HepG2 (cell line): ENCODE measurements at regions of chr3 and their contacts with region 1.

Region 1: GRCh38 chr3:129224984-129225393 is 24.4 kb upstream of the COPG1 start:
- DNase-seq: peak; percentile 92
- ATAC-seq: peak; percentile 96
- H3K4me3 ChIP-seq: peak overlapping the region; percentile 48 to 67 (median 60)
- H3K27ac ChIP-seq: peak overlapping the region; percentile 91
- H3K4me1 ChIP-seq: peaks cover 59% of the 10 kb centered on the region
- H3K27me3 ChIP-seq: no peaks in the 10 kb centered on the region
- CTCF ChIP-seq: peak; percentile 26; the same call in 1 of the 2 replicates
- EP300 ChIP-seq: peak in 1 of 2 experiments; percentile 73; a peak in 3 of 4 replicates
- POLR2A ChIP-seq: peak; percentile 81 to 89
- RAD21 ChIP-seq: peak; percentile 8; the same call in 1 of the 2 replicates

Region 2: DNA sequence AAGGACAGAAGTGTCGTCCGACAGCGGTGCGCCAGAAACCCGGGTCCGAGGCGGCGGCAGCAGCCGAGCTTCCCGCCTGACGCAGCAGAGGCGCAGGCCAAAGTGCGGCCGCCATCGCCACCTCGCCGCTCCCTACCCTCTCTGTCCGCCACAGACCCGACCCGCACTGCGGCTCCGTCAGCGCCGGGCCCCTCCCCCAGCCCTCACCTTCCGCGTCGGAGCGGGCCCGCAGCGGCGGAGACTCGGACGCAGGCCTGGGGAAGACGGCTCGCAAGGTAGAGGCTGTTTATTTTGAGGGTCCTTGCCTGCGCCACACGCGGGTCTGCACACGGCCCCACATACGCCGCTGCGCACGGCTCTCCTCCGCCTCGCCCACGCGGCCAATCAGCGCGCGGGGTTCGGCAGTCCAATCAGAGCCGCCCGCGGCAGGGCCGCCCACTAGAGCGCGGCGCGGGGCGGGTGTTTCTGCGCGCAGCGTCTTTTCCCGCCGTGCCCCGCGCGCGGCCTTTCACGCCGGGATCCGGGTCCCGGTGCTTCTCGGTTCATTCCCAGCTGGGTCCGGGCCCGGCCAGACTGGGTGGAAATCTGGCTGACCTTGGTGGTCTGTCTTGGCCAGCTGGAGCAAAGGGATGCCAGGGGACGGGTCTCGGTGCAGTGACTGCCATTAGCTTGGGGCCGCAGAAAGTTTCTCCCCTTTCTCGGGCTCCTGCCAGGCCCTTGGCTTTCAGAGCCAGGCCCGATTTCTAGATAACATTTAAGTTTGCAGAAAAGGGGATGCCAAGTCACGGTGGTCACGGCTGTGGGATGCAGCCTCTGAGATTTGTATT is 41.2 kb before region 1 on chr3 and contains the start of gene CNBP:
- CTCF ChIA-PET with region 1: no interaction called
- POLR2A ChIA-PET with region 1: interaction called, 16 read pairs
- in situ Hi-C with region 1: no loop called
- intact Hi-C with region 1: loop called (anchors 5 kb)
- DNase-seq: peak; percentile 83
- ATAC-seq: peak; percentile 98
- H3K4me3 ChIP-seq: peak within 1 kb of the TSS; percentile 91 to 95 (median 95)
- H3K27ac ChIP-seq: peak within 1 kb of the TSS; percentile 99
- H3K4me1 ChIP-seq: peaks cover 40% of the 10 kb centered on the region
- H3K27me3 ChIP-seq: no peaks in the 10 kb centered on the region; a peak in 1 of 5 replicates
- CTCF ChIP-seq: no peak; the same call in 1 of the 2 replicates
- EP300 ChIP-seq: no peak; a peak in 1 of 4 replicates
- POLR2A ChIP-seq: peak; percentile 85 to 94
- RAD21 ChIP-seq: no peak; the same call in 1 of the 2 replicates
- total RNA-seq, gene CNBP: 354 and 539 TPM in 2 replicates

Region 3: DNA sequence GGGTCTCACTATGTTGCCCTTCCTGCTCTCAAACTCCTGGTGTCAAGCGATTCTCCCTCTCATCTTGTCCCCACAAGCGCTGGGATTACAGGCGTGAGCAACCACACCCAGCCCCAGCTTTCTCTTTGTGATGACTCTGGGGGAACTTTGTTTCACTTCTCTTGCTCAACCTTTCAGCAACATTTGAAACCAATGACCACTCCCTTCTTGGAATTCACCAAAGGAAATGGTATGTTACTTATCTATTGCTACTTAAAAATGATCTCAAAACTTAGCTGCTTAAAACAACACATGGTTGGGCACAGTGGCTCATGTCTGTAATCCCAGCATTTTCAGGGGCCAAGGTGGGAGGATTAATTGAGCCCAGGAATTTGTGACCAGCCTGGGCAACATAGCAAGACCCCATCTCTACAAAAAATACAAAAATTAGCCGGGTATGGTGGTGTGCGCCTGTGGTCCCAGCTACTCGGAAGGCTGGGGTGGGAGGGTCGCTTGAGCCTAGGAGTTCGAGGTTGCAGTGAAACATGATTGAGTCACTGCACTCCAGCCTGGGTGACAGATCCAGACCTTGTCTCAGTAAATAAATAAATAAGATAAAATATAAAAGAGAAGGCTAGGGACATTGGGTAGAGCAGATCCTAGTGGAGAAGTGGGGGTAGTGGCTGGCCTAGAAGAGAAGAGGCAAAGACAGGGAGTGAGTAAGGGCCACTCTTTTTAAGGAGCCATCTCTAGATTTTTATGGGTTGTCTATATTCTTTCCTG is 14.1 kb after region 1 on chr3:
- CTCF ChIA-PET with region 1: interaction called, 3 read pairs
- POLR2A ChIA-PET with region 1: interaction called, 10 read pairs
- in situ Hi-C with region 1: no loop called
- intact Hi-C with region 1: loop called (anchors 2 kb)
- DNase-seq: no peak
- ATAC-seq: peak; percentile 46
- H3K4me3 ChIP-seq: 0 out of 6 replicates have a peak overlapping the region, but pooled peaks of 1 of the 3 experiments have one; percentile 7
- H3K27ac ChIP-seq: no peak overlapping the region
- H3K4me1 ChIP-seq: peaks cover 32% of the 10 kb centered on the region
- H3K27me3 ChIP-seq: no peaks in the 10 kb centered on the region
- CTCF ChIP-seq: no peak
- EP300 ChIP-seq: no peak
- POLR2A ChIP-seq: no peak
- RAD21 ChIP-seq: no peak

Region 4: DNA sequence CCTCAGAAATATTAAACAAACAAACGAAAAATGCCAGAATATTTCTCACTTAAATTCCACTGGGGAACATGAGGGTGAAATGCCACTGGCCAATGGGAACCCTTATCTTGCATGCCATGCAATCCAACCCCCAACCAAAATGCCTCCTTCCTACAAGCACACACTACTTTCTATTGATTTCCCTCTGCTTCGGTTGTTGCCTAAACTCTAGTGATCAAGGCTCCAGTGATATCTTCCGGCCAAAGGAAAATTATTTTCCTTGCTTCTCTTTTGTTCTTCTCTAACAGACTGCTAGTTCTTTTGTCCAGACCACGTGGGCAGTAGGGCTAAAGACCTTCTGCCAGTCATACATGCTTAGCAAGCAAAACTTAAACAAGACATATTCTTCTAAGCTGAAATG is 552.8 kb after region 1 on chr3:
- CTCF ChIA-PET with region 1: no interaction called
- POLR2A ChIA-PET with region 1: no interaction called
- in situ Hi-C with region 1: no loop called
- intact Hi-C with region 1: no loop called
- DNase-seq: no peak
- ATAC-seq: no peak
- H3K4me3 ChIP-seq: no peak overlapping the region
- H3K27ac ChIP-seq: no peak overlapping the region
- H3K4me1 ChIP-seq: no peaks in the 10 kb centered on the region
- H3K27me3 ChIP-seq: no peaks in the 10 kb centered on the region
- CTCF ChIP-seq: no peak
- EP300 ChIP-seq: no peak
- POLR2A ChIP-seq: no peak
- RAD21 ChIP-seq: no peak